Activated CD4-positive, alpha-beta T cell treated with anti-CD3 and anti-CD28 coated beads, Interleukin-2, amount 10 ng/mL, durations not matched to agents 7 days and 5 days (primary cell): ENCODE measurements at regions of chr1 and their contacts with region 1.

Region 1: DNA sequence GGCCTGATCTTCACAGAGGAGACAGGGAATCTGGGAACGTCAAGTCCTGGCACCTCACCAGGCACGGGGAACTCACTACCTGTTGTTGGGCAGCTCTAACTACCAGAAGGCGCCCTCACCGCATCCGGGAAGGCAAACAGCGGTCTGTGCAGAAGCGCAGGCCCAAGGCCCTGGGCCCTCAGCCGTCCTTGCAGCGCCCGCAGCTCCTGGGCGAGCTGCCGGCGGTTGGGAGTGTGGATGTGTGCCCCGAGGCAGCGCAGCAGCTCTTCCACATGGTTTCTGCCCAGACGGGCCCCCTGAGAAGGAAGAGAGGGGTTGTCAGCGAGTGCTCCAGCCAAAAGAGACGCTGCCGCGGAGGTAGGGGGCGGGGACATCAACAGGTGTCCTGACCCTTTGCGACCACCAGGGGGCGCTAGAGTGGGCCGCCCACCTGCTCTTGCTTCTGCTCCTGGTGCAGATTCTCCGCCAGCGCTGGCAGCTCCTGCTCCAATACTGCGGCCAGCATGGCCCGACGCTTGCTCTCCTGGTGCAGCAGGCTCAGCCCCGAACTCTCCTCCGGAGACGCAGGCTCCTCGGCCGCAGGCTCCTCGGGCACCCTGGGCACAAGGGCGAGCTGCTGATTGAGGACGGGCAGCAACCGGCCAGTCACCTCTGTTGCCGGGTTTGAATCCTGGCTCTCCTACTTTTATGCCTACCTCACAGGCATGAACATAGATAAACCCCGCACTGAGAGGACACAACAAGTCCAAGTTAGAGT is 9.3 kb downstream of the MAP3K6 start:
- DNase-seq: peak; percentile 83
- H3K4me3 Mint-ChIP-seq: peak overlapping the region; percentile 72
- H3K27ac Mint-ChIP-seq: peak overlapping the region; percentile 93
- H3K4me1 Mint-ChIP-seq: peaks cover 43% of the 10 kb centered on the region
- H3K27me3 Mint-ChIP-seq: peaks cover 3% of the 10 kb centered on the region

Region 2: GRCh38 chr1:27087371-27088220 is 269.9 kb before region 1 on chr1:
- CTCF ChIA-PET with region 1: no interaction called
- POLR2A ChIA-PET with region 1: no interaction called
- DNase-seq: no peak
- H3K4me3 Mint-ChIP-seq: no peak overlapping the region
- H3K27ac Mint-ChIP-seq: no peak overlapping the region
- H3K4me1 Mint-ChIP-seq: peaks cover 5% of the 10 kb centered on the region
- H3K27me3 Mint-ChIP-seq: peaks cover 11% of the 10 kb centered on the region

Region 3: DNA sequence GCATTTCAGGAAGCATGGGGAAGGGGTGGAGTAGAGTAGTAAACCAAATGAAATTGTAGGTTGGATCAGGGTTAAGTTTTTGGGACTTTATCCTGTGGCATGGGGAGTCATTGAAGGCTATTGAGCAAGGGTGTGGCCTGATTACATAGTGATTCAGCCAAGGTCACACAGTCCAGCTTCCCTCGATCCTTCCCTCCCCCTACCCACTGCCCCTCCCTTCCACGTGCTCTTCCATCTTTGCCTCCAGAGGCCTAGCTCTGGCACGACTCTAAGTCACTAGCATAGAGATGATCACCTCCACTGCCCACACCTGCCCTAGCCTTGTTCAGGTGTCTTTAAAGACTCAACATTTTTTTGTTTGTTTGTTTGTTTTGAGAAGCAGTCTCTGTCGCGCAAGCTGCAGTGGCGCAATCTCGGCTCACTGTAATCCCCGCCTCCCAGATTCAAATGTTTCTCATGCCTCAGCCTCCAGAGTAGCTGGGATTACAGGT is 165.4 kb before region 1 on chr1:
- CTCF ChIA-PET with region 1: no interaction called
- POLR2A ChIA-PET with region 1: no interaction called
- DNase-seq: no peak
- H3K4me3 Mint-ChIP-seq: no peak overlapping the region
- H3K27ac Mint-ChIP-seq: no peak overlapping the region
- H3K4me1 Mint-ChIP-seq: no peaks in the 10 kb centered on the region
- H3K27me3 Mint-ChIP-seq: peaks cover 3% of the 10 kb centered on the region

Region 4: GRCh38 chr1:27332536-27333281 is 24.8 kb before region 1 on chr1:
- CTCF ChIA-PET with region 1: interaction called, 21 read pairs
- POLR2A ChIA-PET with region 1: no interaction called
- DNase-seq: peak; percentile 60
- H3K4me3 Mint-ChIP-seq: no peak overlapping the region
- H3K27ac Mint-ChIP-seq: peak overlapping the region; percentile 60
- H3K4me1 Mint-ChIP-seq: peaks cover 26% of the 10 kb centered on the region
- H3K27me3 Mint-ChIP-seq: no peaks in the 10 kb centered on the region

Region 5: DNA sequence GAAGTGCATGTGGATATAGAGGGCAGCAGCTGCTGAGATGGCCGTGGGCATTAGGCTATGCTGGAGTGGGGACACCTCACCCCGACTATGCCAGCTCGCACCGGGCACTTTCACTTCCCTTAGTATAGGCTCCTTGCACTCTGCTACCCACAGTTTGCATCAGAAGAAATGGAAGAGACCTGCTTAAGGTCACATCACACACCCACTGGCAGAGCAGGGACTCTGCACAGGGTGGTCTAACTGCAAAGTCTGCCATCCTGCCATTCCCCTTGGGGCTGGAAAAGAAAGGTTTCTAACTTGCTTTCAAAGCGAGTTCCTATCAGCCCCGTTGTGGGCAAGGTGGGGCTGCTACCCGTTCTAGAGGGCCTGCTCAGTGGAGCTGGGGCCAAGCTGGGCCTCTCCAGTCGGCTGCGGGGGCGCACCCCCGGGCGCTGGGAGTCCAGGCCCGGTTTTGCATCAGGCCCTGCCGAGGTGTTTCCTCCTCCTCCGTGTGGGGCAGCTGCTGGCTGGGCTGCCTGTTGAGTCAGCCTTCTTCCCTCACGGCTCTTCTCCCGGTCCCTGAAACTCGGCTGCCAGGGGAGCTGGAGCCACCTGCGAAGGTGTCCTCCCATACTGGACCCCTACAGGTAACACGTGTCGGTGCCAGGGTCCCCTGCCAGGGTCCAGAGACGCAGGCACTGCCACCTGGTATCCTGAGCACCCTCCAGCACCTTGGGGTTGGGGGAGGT is 15.8 kb before region 1 on chr1 and contains the start of gene SYTL1:
- CTCF ChIA-PET with region 1: interaction called, 68 read pairs
- POLR2A ChIA-PET with region 1: interaction called, 4 read pairs
- DNase-seq: peak; percentile 72
- H3K4me3 Mint-ChIP-seq: peak within 1 kb of the TSS; percentile 84
- H3K27ac Mint-ChIP-seq: peak within 1 kb of the TSS; percentile 89
- H3K4me1 Mint-ChIP-seq: peaks cover 44% of the 10 kb centered on the region
- H3K27me3 Mint-ChIP-seq: no peaks in the 10 kb centered on the region
- total RNA-seq, gene SYTL1: 83.5 to 106 TPM

Region 6: DNA sequence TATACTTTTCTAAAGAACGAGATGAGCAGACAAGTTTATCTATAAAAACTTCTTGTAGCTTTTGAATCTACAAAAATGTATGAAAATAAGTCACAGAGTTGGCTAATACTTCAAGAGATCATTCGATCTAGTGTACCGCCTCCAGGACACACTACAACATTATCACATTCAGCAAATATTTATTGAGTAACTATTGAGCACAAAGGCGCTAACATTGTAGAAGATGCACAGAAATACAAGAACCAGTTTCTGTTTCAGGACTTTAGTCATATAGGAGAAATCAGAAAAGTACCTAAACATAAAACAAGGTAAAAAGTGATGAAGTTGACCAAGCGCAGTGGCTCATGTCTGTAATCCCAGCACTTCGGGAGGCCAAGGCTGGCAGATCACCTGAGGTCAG is 111.9 kb after region 1 on chr1:
- CTCF ChIA-PET with region 1: no interaction called
- POLR2A ChIA-PET with region 1: no interaction called
- DNase-seq: no peak
- H3K4me3 Mint-ChIP-seq: no peak overlapping the region
- H3K27ac Mint-ChIP-seq: peak overlapping the region; percentile 10
- H3K4me1 Mint-ChIP-seq: peaks cover 37% of the 10 kb centered on the region
- H3K27me3 Mint-ChIP-seq: no peaks in the 10 kb centered on the region